Activated T-helper 2 cell treated with anti-CD3 and anti-CD28 coated beads, Interferon-gamma antibody, Interleukin-2, Interleukin-4, amounts not matched to agents 10 μg/mL and 5 μg/mL and 100 μg/mL, durations not matched to agents 14 hours and 24 hours and 36 hours (primary cell): ENCODE measurements at regions of chr1 and their contacts with region 1.

Region 1: GRCh38 chr1:41751804-41752513 is 166.8 kb downstream of the HIVEP3 start:
- DNase-seq: no peak
- H3K4me3 Mint-ChIP-seq: no peak overlapping the region
- H3K27ac Mint-ChIP-seq: peak overlapping the region; percentile 66
- H3K4me1 Mint-ChIP-seq: peaks cover 73% of the 10 kb centered on the region
- H3K27me3 Mint-ChIP-seq: no peaks in the 10 kb centered on the region

Region 2: GRCh38 chr1:41650028-41650880 is 101.7 kb before region 1 on chr1:
- intact Hi-C with region 1: no loop called
- DNase-seq: no peak
- H3K4me3 Mint-ChIP-seq: peak overlapping the region; percentile 28
- H3K27ac Mint-ChIP-seq: peak overlapping the region; percentile 87
- H3K4me1 Mint-ChIP-seq: peaks cover 60% of the 10 kb centered on the region
- H3K27me3 Mint-ChIP-seq: no peaks in the 10 kb centered on the region

Region 3: GRCh38 chr1:41783189-41783639 is 31.3 kb after region 1 on chr1:
- intact Hi-C with region 1: loop called (anchors 2 kb)
- DNase-seq: no peak
- H3K4me3 Mint-ChIP-seq: no peak overlapping the region
- H3K27ac Mint-ChIP-seq: peak overlapping the region; percentile 32
- H3K4me1 Mint-ChIP-seq: peaks cover 18% of the 10 kb centered on the region
- H3K27me3 Mint-ChIP-seq: no peaks in the 10 kb centered on the region

Region 4: DNA sequence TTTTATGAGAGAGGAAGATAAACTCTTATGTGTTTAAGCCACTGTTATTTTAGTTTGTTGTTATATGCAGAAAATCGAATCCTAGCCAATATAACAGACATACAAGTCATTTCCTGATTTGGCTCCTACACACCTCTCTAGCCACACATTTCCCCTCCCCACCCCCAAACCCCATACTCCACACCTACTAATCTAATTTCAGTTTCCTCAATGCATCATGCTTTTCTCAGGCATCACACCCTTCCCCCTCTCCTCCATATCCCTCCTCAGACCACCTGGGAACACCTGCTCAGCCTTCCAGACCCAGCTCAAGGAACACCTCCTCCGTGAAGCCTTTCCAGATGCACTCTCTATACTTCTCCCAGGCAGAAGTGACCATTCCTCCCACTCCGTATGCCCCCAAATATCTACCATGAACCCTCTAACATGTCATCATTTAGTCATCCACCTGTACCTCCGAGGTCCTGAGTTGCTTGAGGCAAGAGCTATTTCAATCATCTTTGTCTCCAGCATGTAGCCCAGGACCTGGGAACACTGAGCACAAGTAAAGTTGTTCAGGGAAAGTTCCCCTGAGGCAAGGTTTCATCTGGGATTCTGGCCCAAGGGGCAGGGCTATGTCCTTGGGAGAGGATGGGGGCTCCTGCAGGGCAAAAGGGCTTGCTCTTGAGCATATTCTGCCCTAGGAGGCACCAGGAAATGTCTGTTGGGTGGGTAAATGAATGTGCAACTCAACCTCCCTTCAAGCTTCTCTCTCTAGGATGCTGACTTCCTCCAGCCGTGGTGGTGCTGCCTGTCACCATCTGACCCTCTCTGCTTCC is 39.9 kb after region 1 on chr1:
- intact Hi-C with region 1: loop called (anchors 2 kb)
- DNase-seq: no peak
- H3K4me3 Mint-ChIP-seq: no peak overlapping the region
- H3K27ac Mint-ChIP-seq: peak overlapping the region; percentile 80
- H3K4me1 Mint-ChIP-seq: peaks cover 49% of the 10 kb centered on the region
- H3K27me3 Mint-ChIP-seq: no peaks in the 10 kb centered on the region

Region 5: DNA sequence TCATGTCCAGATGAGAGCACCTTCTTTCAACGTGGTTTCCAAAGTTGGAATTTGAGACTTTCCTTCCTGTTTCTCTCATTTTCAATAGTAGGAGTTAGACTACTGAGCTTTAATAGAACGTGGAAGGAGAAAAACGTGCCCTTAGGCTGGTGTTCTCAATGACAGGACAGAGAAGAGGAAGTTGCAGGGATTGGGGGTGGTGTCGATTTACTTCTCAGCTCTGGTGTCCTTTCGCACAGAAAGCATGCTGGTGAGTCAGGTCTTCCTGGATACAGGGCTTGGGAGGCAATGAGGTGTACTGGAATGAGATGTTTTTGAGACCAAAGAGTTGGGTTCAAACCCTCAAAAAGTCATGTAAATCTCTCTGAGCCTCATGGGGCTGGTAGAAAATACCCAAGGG is 99.6 kb after region 1 on chr1:
- intact Hi-C with region 1: loop called (anchors 1 kb)
- DNase-seq: no peak
- H3K4me3 Mint-ChIP-seq: no peak overlapping the region
- H3K27ac Mint-ChIP-seq: no peak overlapping the region
- H3K4me1 Mint-ChIP-seq: peaks cover 21% of the 10 kb centered on the region
- H3K27me3 Mint-ChIP-seq: no peaks in the 10 kb centered on the region

Region 6: DNA sequence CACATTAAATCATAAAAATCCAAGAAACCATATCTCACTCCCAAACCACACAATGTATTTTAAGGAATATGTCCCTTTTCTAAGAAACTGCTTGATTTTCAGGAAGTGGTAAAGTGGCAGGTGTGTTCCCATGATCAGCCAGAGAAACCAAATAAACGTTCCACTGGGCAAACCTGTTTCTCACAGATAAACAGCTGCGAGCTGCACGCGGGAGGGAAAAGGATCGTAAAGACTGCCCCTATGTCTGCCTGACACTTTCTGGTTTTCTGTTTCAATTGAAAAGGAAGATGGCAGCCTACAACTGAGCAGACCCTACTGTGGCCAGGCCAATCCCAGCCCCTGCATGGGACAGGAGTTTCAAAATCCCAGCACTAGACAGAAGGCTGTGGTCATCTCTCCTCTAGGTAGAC is 130.1 kb after region 1 on chr1:
- intact Hi-C with region 1: no loop called
- DNase-seq: no peak
- H3K4me3 Mint-ChIP-seq: no peak overlapping the region
- H3K27ac Mint-ChIP-seq: no peak overlapping the region
- H3K4me1 Mint-ChIP-seq: peaks cover 13% of the 10 kb centered on the region
- H3K27me3 Mint-ChIP-seq: peaks cover 7% of the 10 kb centered on the region